Gastrocnemius medialis (tissue), 4 donors: ENCODE measurements at regions of chr18 and their contacts with region 1.

Region 1: GRCh38 chr18:35143622-35144596 is 96.9 kb upstream of the ZNF397 start:
- DNase-seq: peak; percentile 40 to 65
- ATAC-seq: peak; percentile 83 to 94
- H3K4me3 ChIP-seq: no peak overlapping the region
- H3K27ac ChIP-seq: peak overlapping the region; percentile 11 to 47 (median 39)
- H3K4me1 ChIP-seq: peaks cover 0 to 6% of the 10 kb centered on the region in 2 donors
- H3K27me3 ChIP-seq: no peaks in the 10 kb centered on the region
- CTCF ChIP-seq: peak; percentile 73 to 85 (median 78)
- POLR2A ChIP-seq: no peak

Region 2: GRCh38 chr18:34867520-34867919 is 276.4 kb before region 1 on chr18:
- in situ Hi-C with region 1: loop called (anchors 10 to 25 kb)
- intact Hi-C with region 1: loop called (anchors 5 kb)
- DNase-seq: peak in 1 of 2 donors; percentile 28
- ATAC-seq: peak in 1 of 2 donors; percentile 27
- H3K4me3 ChIP-seq: no peak overlapping the region
- H3K27ac ChIP-seq: peak overlapping the region; percentile 22 to 69 (median 60)
- H3K4me1 ChIP-seq: peaks cover 0 to 21% of the 10 kb centered on the region in 2 donors
- H3K27me3 ChIP-seq: no peaks in the 10 kb centered on the region
- CTCF ChIP-seq: peak in 2 of 5 experiments; percentile 12 to 48
- POLR2A ChIP-seq: no peak

Region 3: DNA sequence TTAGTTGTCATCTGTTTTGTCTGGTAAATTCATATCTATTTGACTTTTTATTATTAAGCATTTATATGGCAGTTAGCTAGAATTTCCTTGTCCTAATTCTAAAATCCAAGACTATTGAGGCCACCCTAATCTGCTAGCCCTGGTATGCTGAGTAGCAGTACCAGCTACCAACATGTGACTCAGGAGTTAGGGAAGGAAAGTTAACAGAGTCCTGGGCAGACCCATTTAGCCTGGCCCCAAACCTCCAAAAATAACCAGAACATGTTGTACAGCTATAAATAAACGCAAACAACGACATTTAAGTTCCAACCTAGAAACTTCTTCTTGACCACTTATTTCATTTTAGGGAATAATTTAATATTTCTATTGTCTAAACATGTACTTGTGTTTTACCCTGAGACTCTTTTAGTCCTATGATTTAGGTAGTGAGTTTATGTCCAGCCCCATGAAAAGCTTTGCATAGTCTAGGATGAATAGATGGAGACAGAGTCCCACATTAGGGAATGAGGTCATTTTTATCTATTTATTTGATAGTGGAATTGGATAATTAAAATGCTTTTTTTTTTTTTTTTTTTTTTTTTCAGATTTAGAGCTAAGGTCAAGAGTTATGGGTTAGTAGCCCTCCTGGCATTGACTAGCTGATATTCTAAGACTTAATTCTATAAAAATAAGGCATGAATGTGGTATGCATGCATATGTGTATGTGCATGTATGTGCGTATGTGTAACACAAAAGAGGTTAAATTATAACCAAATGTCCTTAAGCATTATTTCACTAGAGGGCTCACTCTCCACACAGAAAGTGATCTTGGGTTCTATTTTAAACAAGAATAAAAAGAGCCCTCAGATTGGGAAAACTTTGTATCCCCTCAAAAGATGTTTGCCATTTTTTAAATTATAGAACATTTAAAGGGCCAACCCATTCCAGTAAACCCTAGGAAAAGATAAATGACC is 262.8 kb before region 1 on chr18:
- in situ Hi-C with region 1: no loop called
- intact Hi-C with region 1: loop called (anchors 5 kb)
- DNase-seq: peak; percentile 49 to 72
- ATAC-seq: peak; percentile 94 to 95
- H3K4me3 ChIP-seq: peak overlapping the region in 2 of 4 donors; percentile 8 to 15
- H3K27ac ChIP-seq: peak overlapping the region; percentile 84 to 88 (median 86)
- H3K4me1 ChIP-seq: peaks cover 20 to 33% of the 10 kb centered on the region in 2 donors
- H3K27me3 ChIP-seq: no peaks in the 10 kb centered on the region
- CTCF ChIP-seq: peak in 4 of 5 experiments; percentile 17 to 46 (median 36)
- POLR2A ChIP-seq: peak in 1 of 2 donors; percentile 36

Region 4: GRCh38 chr18:34947711-34948125 is 196.2 kb before region 1 on chr18:
- in situ Hi-C with region 1: no loop called
- intact Hi-C with region 1: loop called (anchors 2 kb)
- DNase-seq: peak; percentile 31 to 36
- ATAC-seq: peak; percentile 75 to 86
- H3K4me3 ChIP-seq: no peak overlapping the region
- H3K27ac ChIP-seq: peak overlapping the region; percentile 76 to 83 (median 80)
- H3K4me1 ChIP-seq: peaks cover 30 to 42% of the 10 kb centered on the region in 2 donors
- H3K27me3 ChIP-seq: no peaks in the 10 kb centered on the region
- CTCF ChIP-seq: no peak
- POLR2A ChIP-seq: no peak

Region 5: GRCh38 chr18:34999756-35000289 is 144.1 kb before region 1 on chr18:
- in situ Hi-C with region 1: loop called (anchors 5 to 10 kb)
- intact Hi-C with region 1: no loop called
- DNase-seq: peak in 1 of 2 donors; percentile 27
- ATAC-seq: peak; percentile 72 to 87
- H3K4me3 ChIP-seq: no peak overlapping the region
- H3K27ac ChIP-seq: peak overlapping the region; percentile 61 to 75 (median 68)
- H3K4me1 ChIP-seq: peaks cover 17 to 22% of the 10 kb centered on the region in 2 donors
- H3K27me3 ChIP-seq: no peaks in the 10 kb centered on the region
- CTCF ChIP-seq: no peak
- POLR2A ChIP-seq: no peak

Region 6: DNA sequence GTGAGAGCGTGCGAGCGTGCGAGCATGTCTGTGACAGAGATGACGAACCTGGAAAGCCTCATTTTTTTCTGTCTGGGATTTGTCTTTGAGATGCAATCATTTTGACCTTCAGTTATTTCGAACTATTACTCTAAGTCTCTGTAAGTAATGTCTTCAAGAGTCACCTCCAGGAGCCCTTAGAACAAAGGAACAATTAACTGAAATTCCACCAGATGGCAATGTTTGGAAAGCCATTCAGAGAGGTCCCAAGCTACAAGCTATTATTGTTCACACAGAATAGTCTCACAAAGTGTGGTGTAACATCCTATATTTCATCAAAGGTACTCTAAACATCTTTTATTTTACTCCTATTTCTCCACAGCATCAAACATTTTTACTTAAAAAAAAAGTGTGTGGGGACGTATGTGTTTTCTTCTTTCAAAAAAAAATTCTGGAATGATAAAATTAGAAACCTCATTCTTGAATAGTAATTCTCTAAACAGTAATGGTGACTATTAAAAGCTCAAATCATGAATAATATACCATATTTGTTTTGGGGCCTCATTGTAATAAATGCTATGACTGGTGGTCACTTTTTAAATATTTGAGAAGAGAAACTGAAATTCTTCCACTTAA is 137.8 kb before region 1 on chr18:
- in situ Hi-C with region 1: loop called (anchors 5 to 10 kb)
- intact Hi-C with region 1: loop called (anchors 1 kb)
- DNase-seq: no peak
- ATAC-seq: peak; percentile 97 to 98
- H3K4me3 ChIP-seq: no peak overlapping the region
- H3K27ac ChIP-seq: peak overlapping the region in 3 of 4 donors; percentile 19 to 36 (median 35)
- H3K4me1 ChIP-seq: peaks cover 7 to 8% of the 10 kb centered on the region in 2 donors
- H3K27me3 ChIP-seq: no peaks in the 10 kb centered on the region
- CTCF ChIP-seq: peak; percentile 51 to 80 (median 66)
- POLR2A ChIP-seq: no peak

Region 7: GRCh38 chr18:35026407-35027061 is 117.4 kb before region 1 on chr18:
- in situ Hi-C with region 1: no loop called
- intact Hi-C with region 1: loop called (anchors 2 kb)
- DNase-seq: no peak
- ATAC-seq: peak; percentile 26 to 38
- H3K4me3 ChIP-seq: no peak overlapping the region
- H3K27ac ChIP-seq: peak overlapping the region; percentile 21 to 63 (median 42)
- H3K4me1 ChIP-seq: peaks cover 64 to 70% of the 10 kb centered on the region in 2 donors
- H3K27me3 ChIP-seq: no peaks in the 10 kb centered on the region
- CTCF ChIP-seq: peak in 3 of 5 experiments; percentile 13 to 23 (median 21)
- POLR2A ChIP-seq: no peak